ENCODE measurements at regions of chr1 and their contacts with region 1.

Region 1: GRCh38 chr1:52225174-52225573 is 83.3 kb downstream of the ZFYVE9 start:
- DNase-seq: no peak
- H3K4me3 ChIP-seq: no peak overlapping the region
- H3K27ac ChIP-seq: no peak overlapping the region
- H3K4me1 ChIP-seq: no peaks in the 10 kb centered on the region
- H3K27me3 ChIP-seq: no peaks in the 10 kb centered on the region
- CTCF ChIP-seq: no peak
- EP300 ChIP-seq: no peak
- POLR2A ChIP-seq: no peak

Region 2: DNA sequence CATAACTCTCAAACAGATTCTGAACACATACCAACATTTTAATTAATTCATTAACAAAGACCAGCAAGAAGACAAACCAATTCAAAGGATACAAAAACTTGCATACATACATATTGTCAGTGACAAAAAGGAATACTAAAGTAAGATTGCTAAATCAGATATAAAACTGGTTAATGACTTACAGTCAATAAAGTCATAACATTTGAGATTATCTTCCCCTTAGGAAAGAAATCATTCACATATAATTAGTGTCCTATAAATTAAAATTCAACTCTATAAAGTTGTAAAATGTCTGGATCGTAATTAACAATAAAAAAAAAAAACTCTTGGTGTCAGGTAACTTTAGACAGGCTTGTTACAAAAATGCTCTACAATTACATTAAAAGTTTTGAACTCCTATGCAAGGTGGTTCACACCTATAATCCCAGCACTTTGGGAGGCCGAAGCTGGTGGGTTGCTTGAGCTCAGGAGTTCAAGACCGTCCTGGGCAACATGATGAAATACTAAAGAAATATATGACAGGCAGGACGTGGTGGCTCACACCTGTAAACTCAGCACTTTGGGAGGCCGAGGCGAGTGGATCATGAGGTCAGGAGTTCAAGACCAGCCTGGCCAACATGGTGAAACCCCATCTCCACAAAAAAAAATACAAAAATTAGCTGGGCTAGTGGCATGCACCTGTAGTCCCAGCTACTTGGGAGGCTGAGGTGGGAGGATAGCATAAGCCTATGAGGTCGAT is 216.9 kb before region 1 on chr1:
- intact Hi-C with region 1: no loop called
- DNase-seq: no peak
- H3K4me3 ChIP-seq: no peak overlapping the region
- H3K27ac ChIP-seq: peak overlapping the region in 1 of 2 donors; percentile 83
- H3K4me1 ChIP-seq: peaks cover 14% of the 10 kb centered on the region
- H3K27me3 ChIP-seq: no peaks in the 10 kb centered on the region
- CTCF ChIP-seq: no peak
- EP300 ChIP-seq: no peak
- POLR2A ChIP-seq: no peak

Region 3: DNA sequence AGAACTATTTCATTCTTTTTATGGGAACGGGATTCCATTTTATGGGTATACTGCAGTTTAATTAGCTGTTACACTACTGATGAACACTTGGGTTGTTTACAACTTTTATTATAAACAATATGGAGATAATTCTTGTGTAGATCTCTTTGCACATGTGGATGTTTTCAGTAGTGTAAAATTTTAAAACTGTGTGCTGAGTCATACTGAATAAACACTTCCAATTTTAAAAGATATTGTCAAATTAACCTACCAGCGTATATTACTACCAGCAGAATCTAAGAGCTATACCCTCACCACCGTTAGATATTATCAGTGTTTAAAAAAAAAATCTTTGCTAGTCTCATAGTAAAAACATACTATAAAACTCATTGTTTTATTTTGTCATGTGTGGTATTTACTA is 34.7 kb after region 1 on chr1:
- intact Hi-C with region 1: loop called in 1 of 4 experiments (anchors 2 kb)
- DNase-seq: no peak
- H3K4me3 ChIP-seq: no peak overlapping the region
- H3K27ac ChIP-seq: no peak overlapping the region
- H3K4me1 ChIP-seq: peaks cover 3% of the 10 kb centered on the region
- H3K27me3 ChIP-seq: no peaks in the 10 kb centered on the region
- CTCF ChIP-seq: no peak
- EP300 ChIP-seq: no peak
- POLR2A ChIP-seq: no peak

Measured in ovary (tissue), 10 donors.